B cell (primary cell): ENCODE measurements at regions of chr16 and their contacts with region 1.

Region 1: GRCh38 chr16:85688586-85689284 is at the start of gene GINS2:
- DNase-seq: peak; percentile 93
- ATAC-seq: peak; percentile 100
- H3K4me3 ChIP-seq: peak within 1 kb of the TSS in 4 of 5 experiments; percentile 52 to 78 (median 70)
- H3K4me3 Mint-ChIP-seq: peak within 1 kb of the TSS; percentile 81
- H3K27ac ChIP-seq: no peak within 1 kb of the TSS
- H3K27ac Mint-ChIP-seq: no peak within 1 kb of the TSS
- H3K4me1 ChIP-seq: peaks cover 15 to 29% of the 10 kb centered on the region in 2 donors
- H3K4me1 Mint-ChIP-seq: peaks cover 19% of the 10 kb centered on the region
- H3K27me3 ChIP-seq: peaks cover 0 to 13% (median 5%) of the 10 kb centered on the region in 4 experiments
- H3K27me3 Mint-ChIP-seq: peaks cover 3% of the 10 kb centered on the region
- CTCF ChIP-seq: no peak
- total RNA-seq, gene GINS2: 4.2 and 4.3 TPM in 2 replicates

Region 2: GRCh38 chr16:85667841-85668413 is 20.8 kb before region 1 on chr16:
- CTCF ChIA-PET with region 1: no interaction called
- POLR2A ChIA-PET with region 1: no interaction called
- intact Hi-C with region 1: no loop called
- DNase-seq: no peak
- ATAC-seq: no peak
- H3K4me3 ChIP-seq: no peak overlapping the region
- H3K4me3 Mint-ChIP-seq: no peak overlapping the region
- H3K27ac ChIP-seq: no peak overlapping the region
- H3K27ac Mint-ChIP-seq: no peak overlapping the region
- H3K4me1 ChIP-seq: no peaks in the 10 kb centered on the region
- H3K4me1 Mint-ChIP-seq: no peaks in the 10 kb centered on the region
- H3K27me3 ChIP-seq: no peaks in the 10 kb centered on the region
- H3K27me3 Mint-ChIP-seq: no peaks in the 10 kb centered on the region
- CTCF ChIP-seq: no peak

Region 3: DNA sequence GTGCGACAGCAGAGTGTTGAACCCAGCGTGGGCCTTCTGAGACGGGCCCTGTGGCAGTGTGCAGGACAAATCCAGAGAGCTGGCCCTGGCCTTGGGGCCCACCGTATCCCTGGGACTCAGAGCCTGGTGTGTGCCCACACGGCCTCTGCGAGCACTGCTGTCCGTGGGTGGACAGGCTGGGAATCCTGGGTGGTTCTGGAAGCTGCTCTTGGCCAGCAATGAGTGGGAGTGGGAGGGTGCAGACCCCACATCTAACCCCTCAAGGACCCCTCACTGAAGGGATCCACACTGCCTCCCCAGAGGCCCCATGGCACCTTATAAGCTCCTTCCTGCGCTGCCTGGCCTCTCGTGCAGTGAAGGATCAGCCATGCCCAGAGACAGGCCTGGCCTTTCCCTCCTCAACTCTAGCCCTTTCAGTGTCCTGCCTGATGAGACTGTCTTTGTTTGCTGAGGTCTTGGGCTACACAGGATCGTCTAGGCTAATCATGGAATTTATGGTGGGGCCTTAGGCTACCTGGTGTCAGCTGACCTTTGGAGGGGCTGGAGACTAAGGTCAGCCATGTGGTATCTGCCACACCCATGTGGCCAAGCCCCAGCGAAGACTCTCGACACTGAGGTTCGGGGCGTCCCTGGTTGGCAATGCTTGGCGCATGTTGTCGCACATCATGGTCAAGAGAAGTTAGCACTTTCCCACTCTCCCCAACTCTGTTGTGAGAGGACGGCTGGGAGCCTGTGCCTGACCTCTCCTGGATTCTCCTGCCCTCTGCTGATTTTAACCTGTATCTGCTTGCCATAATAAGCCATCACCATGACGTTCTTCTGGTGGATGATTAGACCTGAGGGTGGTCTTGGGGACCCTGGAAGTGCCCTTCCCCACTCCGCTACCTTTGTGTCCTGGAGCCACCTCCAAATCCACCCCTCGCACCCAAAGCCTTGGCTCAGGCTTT is 16.4 kb after region 1 on chr16:
- CTCF ChIA-PET with region 1: no interaction called
- POLR2A ChIA-PET with region 1: interaction called, 10 read pairs
- intact Hi-C with region 1: no loop called
- DNase-seq: no peak
- ATAC-seq: no peak
- H3K4me3 ChIP-seq: no peak overlapping the region
- H3K4me3 Mint-ChIP-seq: no peak overlapping the region
- H3K27ac ChIP-seq: no peak overlapping the region
- H3K27ac Mint-ChIP-seq: no peak overlapping the region
- H3K4me1 ChIP-seq: no peaks in the 10 kb centered on the region
- H3K4me1 Mint-ChIP-seq: no peaks in the 10 kb centered on the region
- H3K27me3 ChIP-seq: no peaks in the 10 kb centered on the region
- H3K27me3 Mint-ChIP-seq: no peaks in the 10 kb centered on the region
- CTCF ChIP-seq: no peak

Region 4: GRCh38 chr16:85735225-85735635 is 46.5 kb after region 1 on chr16:
- CTCF ChIA-PET with region 1: no interaction called
- POLR2A ChIA-PET with region 1: interaction called, 3 read pairs
- intact Hi-C with region 1: loop called (anchors 5 kb)
- DNase-seq: peak; percentile 68
- ATAC-seq: peak; percentile 81
- H3K4me3 ChIP-seq: peak overlapping the region in 4 of 5 experiments; percentile 3 to 38 (median 22)
- H3K4me3 Mint-ChIP-seq: peak overlapping the region; percentile 69
- H3K27ac ChIP-seq: peak overlapping the region in 1 of 2 donors; percentile 11
- H3K27ac Mint-ChIP-seq: peak overlapping the region; percentile 68
- H3K4me1 ChIP-seq: peaks cover 30 to 34% of the 10 kb centered on the region in 2 donors
- H3K4me1 Mint-ChIP-seq: peaks cover 33% of the 10 kb centered on the region
- H3K27me3 ChIP-seq: no peaks in the 10 kb centered on the region
- H3K27me3 Mint-ChIP-seq: no peaks in the 10 kb centered on the region
- CTCF ChIP-seq: no peak

Region 5: GRCh38 chr16:85799497-85800337 is 111.0 kb after region 1 on chr16 and contains the starts of genes COX4I1 and EMC8:
- CTCF ChIA-PET with region 1: no interaction called
- POLR2A ChIA-PET with region 1: interaction called, 3 read pairs
- intact Hi-C with region 1: loop called (anchors 1 kb)
- DNase-seq: peak; percentile 95
- ATAC-seq: peak; percentile 86
- H3K4me3 ChIP-seq: peak within 1 kb of the TSS; percentile 73 to 93 (median 78)
- H3K4me3 Mint-ChIP-seq: peak within 1 kb of the TSS; percentile 92
- H3K27ac ChIP-seq: peak within 1 kb of the TSS; percentile 82 to 97
- H3K27ac Mint-ChIP-seq: peak within 1 kb of the TSS; percentile 98
- H3K4me1 ChIP-seq: peaks cover 19 to 23% of the 10 kb centered on the region in 2 donors
- H3K4me1 Mint-ChIP-seq: peaks cover 57% of the 10 kb centered on the region
- H3K27me3 ChIP-seq: no peaks in the 10 kb centered on the region
- H3K27me3 Mint-ChIP-seq: no peaks in the 10 kb centered on the region
- CTCF ChIP-seq: no peak
- total RNA-seq, gene COX4I1: 767 and 813 TPM in 2 replicates
- total RNA-seq, gene EMC8: 32.9 and 33.1 TPM in 2 replicates